ENCODE measurements at regions of chr6 and their contacts with region 1.

Region 1: GRCh38 chr6:2791124-2791974 is 26.2 kb downstream of the WRNIP1 start:
- DNase-seq: peak; percentile 73
- CTCF ChIP-seq: peak; percentile 65

Region 2: GRCh38 chr6:2773450-2773849 is 17.9 kb before region 1 on chr6:
- CTCF ChIA-PET with region 1: interaction called, 20 read pairs
- POLR2A ChIA-PET with region 1: no interaction called
- DNase-seq: no peak
- CTCF ChIP-seq: no peak

Region 3: DNA sequence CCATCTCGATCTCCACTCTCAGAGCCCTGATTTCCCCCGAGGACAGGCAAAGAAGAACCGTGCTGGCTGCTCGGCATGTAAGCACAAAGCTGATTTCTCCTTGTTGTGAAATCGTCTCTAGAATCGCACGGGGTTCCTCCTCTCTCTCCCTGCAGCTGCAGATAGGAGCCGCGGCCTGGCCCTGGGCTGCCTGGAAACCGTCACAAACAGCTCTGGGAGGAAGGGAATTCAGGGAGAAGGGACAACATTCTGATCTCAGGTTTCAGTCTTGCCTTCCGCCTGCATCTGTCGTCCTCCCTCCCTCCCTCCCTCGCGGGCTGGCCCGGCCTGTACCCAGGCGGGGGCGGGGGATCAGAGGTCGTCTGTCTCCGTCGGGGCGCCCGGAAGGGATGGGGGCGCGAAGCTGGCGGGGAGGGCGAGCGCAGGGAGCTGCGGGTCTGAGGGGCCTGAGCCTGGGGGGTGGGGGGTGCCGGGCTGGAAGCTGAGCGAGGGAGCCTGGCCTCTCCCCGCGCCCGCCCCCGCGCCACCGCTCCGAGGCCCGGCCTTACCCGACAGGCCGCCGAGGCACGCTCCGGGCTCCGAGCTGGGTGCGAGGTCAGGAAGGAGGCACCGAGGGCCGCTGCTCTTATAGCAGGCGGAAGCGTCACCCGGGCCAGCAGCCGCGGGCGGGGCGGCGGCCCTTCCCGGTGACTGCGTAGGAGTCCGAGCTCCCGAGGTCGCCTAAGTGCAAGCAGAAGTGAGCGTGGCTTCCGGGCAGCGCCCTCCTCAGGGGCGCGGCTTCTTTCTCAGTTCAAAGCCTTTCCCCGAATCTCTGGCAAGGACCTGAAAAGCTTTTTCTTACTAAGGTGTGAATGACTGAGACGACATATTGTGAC is 50.2 kb after region 1 on chr6 and contains the start of gene SERPINB1:
- CTCF ChIA-PET with region 1: interaction called, 24 read pairs
- POLR2A ChIA-PET with region 1: interaction called, 3 read pairs
- DNase-seq: peak; percentile 81
- CTCF ChIP-seq: peak; percentile 14

Region 4: GRCh38 chr6:2952557-2953095 is 161.3 kb after region 1 on chr6:
- CTCF ChIA-PET with region 1: interaction called, 10 read pairs
- POLR2A ChIA-PET with region 1: no interaction called
- DNase-seq: peak; percentile 50
- CTCF ChIP-seq: peak; percentile 62

Region 5: GRCh38 chr6:2999618-3000557 is 208.5 kb after region 1 on chr6 and contains the start of gene NQO2:
- CTCF ChIA-PET with region 1: no interaction called
- POLR2A ChIA-PET with region 1: no interaction called
- DNase-seq: peak; percentile 99
- CTCF ChIP-seq: no peak

Measured in GM10248 (cell line).